Activated CD4-positive, alpha-beta T cell treated with anti-CD3 and anti-CD28 coated beads, Interleukin-2, amount 10 ng/mL, durations not matched to agents 24 days and 14 days (primary cell): ENCODE measurements at regions of chr5 and their contacts with region 1.

Region 1: DNA sequence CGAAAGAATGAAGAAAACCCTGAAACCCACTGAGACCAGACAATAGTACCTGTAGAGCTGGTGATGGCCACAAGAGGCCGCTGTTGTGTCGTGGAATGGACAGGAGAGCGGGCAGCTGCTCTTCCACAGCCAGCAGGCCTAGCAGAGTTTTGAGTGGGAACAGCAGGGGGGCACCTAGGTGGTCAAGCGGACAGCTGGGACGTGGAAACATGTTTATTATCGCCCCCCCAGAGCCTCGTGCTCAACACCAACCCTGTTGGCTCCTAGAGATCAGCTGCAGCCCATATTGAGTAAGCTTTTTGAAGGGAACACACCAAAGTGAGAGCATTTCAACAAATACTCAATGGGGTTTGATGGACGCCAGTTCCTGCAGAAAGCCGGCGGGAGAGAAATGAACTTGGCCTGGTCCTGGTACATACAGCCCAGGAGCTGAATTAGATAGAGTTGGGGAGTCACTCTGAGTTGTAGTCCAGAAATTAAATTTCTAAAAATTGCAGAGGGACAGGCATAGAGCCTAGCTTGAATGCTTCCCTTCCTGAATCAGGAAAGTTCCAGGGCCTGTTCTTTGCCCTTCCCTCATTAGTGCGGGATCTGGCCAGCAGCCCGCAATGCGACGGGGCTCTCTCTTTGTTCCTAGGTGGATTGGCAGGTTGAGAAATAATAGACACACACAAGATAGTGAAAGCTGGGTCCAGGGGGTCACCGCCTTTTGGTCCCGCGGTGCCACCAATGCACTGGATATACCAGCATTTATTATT is 33.8 kb downstream of the MFAP3 start:
- DNase-seq: peak; percentile 96
- H3K4me3 Mint-ChIP-seq: peak overlapping the region; percentile 51
- H3K27ac Mint-ChIP-seq: peak overlapping the region; percentile 52
- H3K4me1 Mint-ChIP-seq: peaks cover 44% of the 10 kb centered on the region
- H3K27me3 Mint-ChIP-seq: peaks cover 5% of the 10 kb centered on the region

Region 2: DNA sequence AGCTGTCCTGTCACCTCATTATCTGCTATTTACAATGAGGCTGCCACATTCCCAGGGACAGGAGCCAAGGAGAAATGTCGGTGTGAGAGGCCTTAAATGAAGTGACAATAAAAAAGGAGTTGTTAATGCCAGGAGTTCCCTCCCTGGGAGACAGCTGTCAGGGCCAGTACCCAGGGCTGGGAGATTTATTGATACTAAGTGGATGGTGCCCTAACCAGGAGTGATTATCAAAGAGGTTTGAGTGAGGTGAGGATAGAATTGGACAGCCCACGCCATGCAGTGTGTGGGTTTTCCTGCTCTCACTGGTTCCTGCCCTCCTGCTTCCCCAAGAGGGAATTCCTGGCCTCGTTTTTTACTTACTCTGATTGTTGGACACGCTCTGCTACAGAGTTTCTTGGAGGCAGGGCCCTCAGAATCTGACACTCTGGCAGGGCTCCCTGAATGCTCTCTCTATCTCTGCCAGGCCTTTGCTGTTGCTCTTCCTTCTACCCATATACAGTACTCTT is 431.4 kb before region 1 on chr5:
- intact Hi-C with region 1: no loop called
- DNase-seq: no peak
- H3K4me3 Mint-ChIP-seq: no peak overlapping the region
- H3K27ac Mint-ChIP-seq: no peak overlapping the region
- H3K4me1 Mint-ChIP-seq: no peaks in the 10 kb centered on the region
- H3K27me3 Mint-ChIP-seq: no peaks in the 10 kb centered on the region

Region 3: GRCh38 chr5:154038707-154039457 is 33.7 kb before region 1 on chr5 and contains the starts of genes FAM114A2 and MFAP3:
- intact Hi-C with region 1: loop called (anchors 2 kb)
- DNase-seq: peak; percentile 97
- H3K4me3 Mint-ChIP-seq: peak within 1 kb of the TSS; percentile 96
- H3K27ac Mint-ChIP-seq: peak within 1 kb of the TSS; percentile 96
- H3K4me1 Mint-ChIP-seq: peaks cover 31% of the 10 kb centered on the region
- H3K27me3 Mint-ChIP-seq: no peaks in the 10 kb centered on the region
- total RNA-seq, gene FAM114A2: 23.6 and 27.3 TPM in 2 replicates
- total RNA-seq, gene MFAP3: 23.1 and 26.4 TPM in 2 replicates

Region 4: GRCh38 chr5:154196955-154197652 is 124.5 kb after region 1 on chr5:
- intact Hi-C with region 1: loop called (anchors 1 kb)
- DNase-seq: peak; percentile 69
- H3K4me3 Mint-ChIP-seq: peak overlapping the region; percentile 79
- H3K27ac Mint-ChIP-seq: peak overlapping the region; percentile 92
- H3K4me1 Mint-ChIP-seq: peaks cover 77% of the 10 kb centered on the region
- H3K27me3 Mint-ChIP-seq: no peaks in the 10 kb centered on the region

Region 5: DNA sequence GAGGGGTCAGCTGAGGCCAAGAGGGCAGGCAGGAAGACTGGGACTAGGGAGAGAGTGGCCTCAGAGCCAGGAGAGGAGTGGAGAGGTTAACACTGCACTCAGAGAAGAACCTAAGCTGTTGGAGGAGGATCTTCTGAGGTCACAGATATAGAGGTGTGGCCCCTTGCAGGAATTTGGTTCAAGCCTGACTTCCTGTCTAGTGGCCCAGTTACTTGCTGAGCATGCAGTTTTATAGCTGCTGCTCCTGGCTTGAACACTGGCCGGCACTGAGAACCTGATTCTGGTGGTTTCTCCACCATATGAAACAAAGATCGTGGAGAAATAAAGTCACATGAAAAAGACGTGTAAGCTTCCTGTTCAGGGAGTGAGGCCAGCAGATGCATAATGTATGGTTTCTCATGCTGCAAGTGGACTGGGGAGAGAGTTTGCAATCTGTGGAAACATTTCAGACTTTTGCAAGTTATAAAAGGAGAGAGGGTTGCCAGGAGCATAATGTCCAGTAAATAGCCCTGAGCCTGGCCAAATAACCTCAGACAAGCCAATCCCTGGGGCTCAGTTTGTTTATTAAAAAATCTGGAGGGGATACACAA is 200.5 kb after region 1 on chr5:
- intact Hi-C with region 1: no loop called
- DNase-seq: peak; percentile 79
- H3K4me3 Mint-ChIP-seq: peak overlapping the region; percentile 66
- H3K27ac Mint-ChIP-seq: peak overlapping the region; percentile 84
- H3K4me1 Mint-ChIP-seq: peaks cover 50% of the 10 kb centered on the region
- H3K27me3 Mint-ChIP-seq: no peaks in the 10 kb centered on the region

Region 6: DNA sequence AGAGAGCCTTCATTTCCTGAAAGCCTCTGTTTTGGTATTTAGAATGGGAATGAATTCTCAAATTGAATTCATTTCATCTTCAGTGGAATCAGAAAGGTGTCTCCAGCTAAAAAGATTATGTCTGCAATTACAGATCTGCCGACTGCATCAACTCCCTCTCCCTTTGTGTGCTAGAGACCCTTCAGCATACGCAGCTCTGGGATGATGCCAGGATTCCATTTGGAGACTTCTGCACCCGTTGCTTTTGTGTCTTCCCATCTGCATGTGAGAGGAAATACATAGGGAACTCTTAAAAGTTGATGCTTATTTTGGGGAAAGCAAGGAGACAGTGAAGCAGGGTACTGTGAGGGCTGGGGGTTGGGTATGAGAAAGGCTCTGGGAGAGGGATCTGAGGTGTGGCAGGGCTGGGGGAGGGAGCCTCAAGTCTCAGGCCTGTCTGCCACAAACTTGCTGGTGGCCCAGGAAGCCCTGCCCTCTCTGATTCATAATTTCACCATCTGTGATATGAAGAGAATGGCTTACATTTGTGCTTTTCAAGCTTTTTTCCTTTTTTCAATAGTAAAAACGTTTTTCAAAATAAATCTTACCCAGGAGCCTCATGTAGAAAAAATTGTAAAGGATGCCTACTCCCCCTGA is 283.5 kb after region 1 on chr5:
- intact Hi-C with region 1: no loop called
- DNase-seq: no peak
- H3K4me3 Mint-ChIP-seq: no peak overlapping the region
- H3K27ac Mint-ChIP-seq: peak overlapping the region; percentile 48
- H3K4me1 Mint-ChIP-seq: peaks cover 29% of the 10 kb centered on the region
- H3K27me3 Mint-ChIP-seq: no peaks in the 10 kb centered on the region

Region 7: DNA sequence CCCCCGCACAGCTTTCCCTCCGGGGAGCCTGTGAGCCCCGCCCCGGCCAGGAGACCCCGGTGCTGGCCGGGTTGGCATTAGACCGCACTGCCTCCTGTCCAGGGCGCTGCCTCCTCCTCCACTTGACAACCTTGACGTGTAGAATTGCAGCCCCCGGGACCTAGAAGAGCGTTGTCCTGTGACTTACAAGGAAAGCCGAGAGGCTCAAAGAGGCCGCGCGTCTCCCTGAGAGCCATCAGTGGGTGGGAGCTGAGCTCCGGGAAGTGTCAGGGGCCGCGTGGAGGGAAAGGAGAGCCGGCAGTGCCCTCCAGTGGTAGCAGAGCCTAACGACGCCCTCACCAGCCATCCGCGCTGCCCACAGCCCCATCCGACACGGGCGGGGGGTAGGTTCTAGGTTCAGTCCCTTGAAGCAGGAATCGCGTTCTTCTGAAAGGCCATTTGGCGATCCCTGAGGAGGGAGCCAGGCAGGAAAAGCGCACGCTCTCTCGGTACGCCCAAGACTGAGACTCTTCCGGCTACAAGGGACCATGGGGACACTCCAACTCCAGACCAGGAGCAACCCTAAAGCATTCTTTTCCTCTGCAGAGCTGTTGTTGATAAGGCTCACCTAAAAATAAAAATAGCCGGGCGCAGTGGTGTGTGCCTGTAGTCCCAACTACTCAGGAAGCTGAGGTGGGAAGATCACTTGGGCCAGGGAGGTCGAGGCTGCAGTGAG is 332.6 kb after region 1 on chr5:
- intact Hi-C with region 1: loop called (anchors 1 kb)
- DNase-seq: peak; percentile 91
- H3K4me3 Mint-ChIP-seq: peak overlapping the region; percentile 63
- H3K27ac Mint-ChIP-seq: peak overlapping the region; percentile 59
- H3K4me1 Mint-ChIP-seq: peaks cover 7% of the 10 kb centered on the region
- H3K27me3 Mint-ChIP-seq: no peaks in the 10 kb centered on the region

Region 8: GRCh38 chr5:154467655-154468354 is 395.2 kb after region 1 on chr5:
- intact Hi-C with region 1: loop called (anchors 5 kb)
- DNase-seq: peak; percentile 92
- H3K4me3 Mint-ChIP-seq: no peak overlapping the region
- H3K27ac Mint-ChIP-seq: no peak overlapping the region
- H3K4me1 Mint-ChIP-seq: no peaks in the 10 kb centered on the region
- H3K27me3 Mint-ChIP-seq: peaks cover 58% of the 10 kb centered on the region